ENCODE measurements at regions of chr2 and their contacts with region 1.

Region 1: DNA sequence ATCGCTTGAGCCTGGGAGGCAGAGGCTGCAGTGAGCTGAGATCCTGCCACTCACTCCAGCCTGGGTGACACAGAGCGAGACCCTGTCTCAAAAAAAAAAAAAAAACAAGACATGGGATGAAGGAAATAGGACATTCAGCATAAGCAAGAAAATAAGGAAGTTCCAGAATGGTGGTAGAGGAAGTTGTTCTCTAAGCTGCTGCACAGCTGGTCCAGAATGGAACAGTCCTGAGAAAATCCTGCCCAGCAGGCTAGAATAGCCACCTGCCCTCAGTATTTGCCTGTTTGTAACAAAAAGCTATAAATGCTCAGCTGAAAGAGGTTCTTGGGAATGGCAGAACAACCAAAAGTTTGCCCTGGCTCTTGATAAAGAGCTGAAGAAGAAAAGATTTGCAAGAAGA is 11.1 kb upstream of the MAPRE3 start:
- DNase-seq: no peak
- H3K4me3 ChIP-seq: no peak overlapping the region
- H3K27ac ChIP-seq: no peak overlapping the region
- H3K27me3 ChIP-seq: peaks cover 0 to 25% (median 0%) of the 10 kb centered on the region in 45 donors
- CTCF ChIP-seq: no peak

Region 2: GRCh38 chr2:27016801-27017325 is 57.5 kb after region 1 on chr2:
- intact Hi-C with region 1: loop called (anchors 1 kb)
- DNase-seq: peak in 6 of 10 donors; percentile 28 to 67 (median 56)
- H3K4me3 ChIP-seq: no peak overlapping the region
- H3K27ac ChIP-seq: no peak overlapping the region
- H3K27me3 ChIP-seq: no peaks in the 10 kb centered on the region
- CTCF ChIP-seq: peak; percentile 47 to 85 (median 75)

Measured in dorsolateral prefrontal cortex (tissue), 120 donors.